ENCODE measurements at regions of chr5 and their contacts with region 1.

Region 1: DNA sequence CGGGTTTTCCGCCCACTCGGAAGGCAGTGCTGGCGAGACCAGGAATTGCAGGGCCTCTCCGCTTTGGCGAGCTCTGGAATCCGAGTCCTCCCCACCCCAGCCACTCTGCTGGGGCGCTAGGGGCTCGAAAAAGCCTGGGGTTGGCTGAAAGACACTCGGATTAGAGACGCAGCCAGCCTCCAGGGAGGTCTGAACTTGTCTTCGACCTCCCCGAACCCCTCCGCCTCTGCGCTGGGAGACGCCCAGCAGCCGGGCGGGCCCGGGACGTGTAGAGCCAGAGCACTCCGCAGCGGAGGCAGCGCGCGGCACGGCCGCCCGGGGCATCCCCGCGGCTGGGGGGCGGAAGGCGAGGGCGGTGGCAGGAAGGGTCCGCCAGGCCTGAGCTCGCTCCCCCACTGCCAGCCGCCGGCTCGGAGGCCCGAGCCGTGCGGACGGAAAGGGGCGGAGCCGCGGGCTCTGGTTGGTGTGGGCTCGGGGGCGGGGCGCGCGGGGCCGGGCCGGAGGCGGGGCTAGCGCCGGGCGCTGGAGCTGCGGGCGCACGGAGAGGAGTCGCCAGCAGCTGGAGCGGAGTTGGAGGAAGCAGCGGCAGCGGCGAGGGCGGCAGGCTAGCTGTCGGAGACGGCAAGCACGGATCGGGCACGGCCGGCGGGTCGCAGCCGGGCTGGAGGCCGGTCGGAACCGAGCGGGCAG is at the start of gene PIK3R1:
- DNase-seq: peak; percentile 91 to 94 (median 92)
- H3K4me3 ChIP-seq: peak within 1 kb of the TSS; percentile 85 to 89
- H3K4me3 Mint-ChIP-seq: peak within 1 kb of the TSS; percentile 91 to 97 (median 94)
- H3K27ac ChIP-seq: peak within 1 kb of the TSS; percentile 80
- H3K27ac Mint-ChIP-seq: peak within 1 kb of the TSS; percentile 93 to 96 (median 95)
- H3K4me1 ChIP-seq: peaks cover 43% of the 10 kb centered on the region
- H3K4me1 Mint-ChIP-seq: peaks cover 37 to 51% (median 46%) of the 10 kb centered on the region in 4 donors
- H3K27me3 ChIP-seq: no peaks in the 10 kb centered on the region
- H3K27me3 Mint-ChIP-seq: no peaks in the 10 kb centered on the region
- total RNA-seq, gene PIK3R1: 151 to 152 TPM

Region 2: GRCh38 chr5:67215583-67216471 is 999.5 kb before region 1 on chr5:
- CTCF ChIA-PET with region 1: no interaction called
- POLR2A ChIA-PET with region 1: interaction called, 10 read pairs
- intact Hi-C with region 1: loop called (anchors 5 kb)
- DNase-seq: peak; percentile 72 to 82 (median 80)
- H3K4me3 ChIP-seq: peak overlapping the region; percentile 10 to 44
- H3K4me3 Mint-ChIP-seq: peak overlapping the region; percentile 52 to 91 (median 82)
- H3K27ac ChIP-seq: peak overlapping the region; percentile 52
- H3K27ac Mint-ChIP-seq: peak overlapping the region; percentile 94 to 99 (median 98)
- H3K4me1 ChIP-seq: peaks cover 65% of the 10 kb centered on the region
- H3K4me1 Mint-ChIP-seq: peaks cover 57 to 69% (median 60%) of the 10 kb centered on the region in 4 donors
- H3K27me3 ChIP-seq: no peaks in the 10 kb centered on the region
- H3K27me3 Mint-ChIP-seq: no peaks in the 10 kb centered on the region

Region 3: GRCh38 chr5:67971223-67971830 is 244.0 kb before region 1 on chr5:
- CTCF ChIA-PET with region 1: no interaction called
- POLR2A ChIA-PET with region 1: no interaction called
- intact Hi-C with region 1: no loop called
- DNase-seq: no peak
- H3K4me3 ChIP-seq: no peak overlapping the region
- H3K4me3 Mint-ChIP-seq: no peak overlapping the region
- H3K27ac ChIP-seq: no peak overlapping the region
- H3K27ac Mint-ChIP-seq: no peak overlapping the region
- H3K4me1 ChIP-seq: no peaks in the 10 kb centered on the region
- H3K4me1 Mint-ChIP-seq: no peaks in the 10 kb centered on the region
- H3K27me3 ChIP-seq: no peaks in the 10 kb centered on the region
- H3K27me3 Mint-ChIP-seq: no peaks in the 10 kb centered on the region

Region 4: GRCh38 chr5:68137511-68138140 is 77.7 kb before region 1 on chr5:
- CTCF ChIA-PET with region 1: no interaction called
- POLR2A ChIA-PET with region 1: no interaction called
- intact Hi-C with region 1: no loop called
- DNase-seq: no peak
- H3K4me3 ChIP-seq: no peak overlapping the region
- H3K4me3 Mint-ChIP-seq: no peak overlapping the region
- H3K27ac ChIP-seq: no peak overlapping the region
- H3K27ac Mint-ChIP-seq: no peak overlapping the region
- H3K4me1 ChIP-seq: peaks cover 11% of the 10 kb centered on the region
- H3K4me1 Mint-ChIP-seq: peaks cover 3 to 12% (median 9%) of the 10 kb centered on the region in 4 donors
- H3K27me3 ChIP-seq: no peaks in the 10 kb centered on the region
- H3K27me3 Mint-ChIP-seq: peaks cover 7 to 9% of the 10 kb centered on the region in 2 donors

Region 5: GRCh38 chr5:68149189-68149588 is 66.2 kb before region 1 on chr5:
- CTCF ChIA-PET with region 1: no interaction called
- POLR2A ChIA-PET with region 1: no interaction called
- intact Hi-C with region 1: no loop called
- DNase-seq: no peak
- H3K4me3 ChIP-seq: no peak overlapping the region
- H3K4me3 Mint-ChIP-seq: no peak overlapping the region
- H3K27ac ChIP-seq: no peak overlapping the region
- H3K27ac Mint-ChIP-seq: no peak overlapping the region
- H3K4me1 ChIP-seq: no peaks in the 10 kb centered on the region
- H3K4me1 Mint-ChIP-seq: peaks cover 0 to 7% (median 3%) of the 10 kb centered on the region in 4 donors
- H3K27me3 ChIP-seq: no peaks in the 10 kb centered on the region
- H3K27me3 Mint-ChIP-seq: no peaks in the 10 kb centered on the region

Region 6: GRCh38 chr5:68239487-68239886 is 24.1 kb after region 1 on chr5:
- CTCF ChIA-PET with region 1: interaction called, 19 read pairs
- POLR2A ChIA-PET with region 1: interaction called, 35 read pairs
- intact Hi-C with region 1: loop called (anchors 1 kb)
- DNase-seq: peak; percentile 76 to 93 (median 79)
- H3K4me3 ChIP-seq: no peak overlapping the region
- H3K4me3 Mint-ChIP-seq: peak overlapping the region in 7 of 8 donors; percentile 34 to 76 (median 60)
- H3K27ac ChIP-seq: peak overlapping the region; percentile 20
- H3K27ac Mint-ChIP-seq: peak overlapping the region; percentile 73 to 97 (median 89)
- H3K4me1 ChIP-seq: peaks cover 77% of the 10 kb centered on the region
- H3K4me1 Mint-ChIP-seq: peaks cover 67 to 90% (median 78%) of the 10 kb centered on the region in 4 donors
- H3K27me3 ChIP-seq: no peaks in the 10 kb centered on the region
- H3K27me3 Mint-ChIP-seq: no peaks in the 10 kb centered on the region

Region 7: DNA sequence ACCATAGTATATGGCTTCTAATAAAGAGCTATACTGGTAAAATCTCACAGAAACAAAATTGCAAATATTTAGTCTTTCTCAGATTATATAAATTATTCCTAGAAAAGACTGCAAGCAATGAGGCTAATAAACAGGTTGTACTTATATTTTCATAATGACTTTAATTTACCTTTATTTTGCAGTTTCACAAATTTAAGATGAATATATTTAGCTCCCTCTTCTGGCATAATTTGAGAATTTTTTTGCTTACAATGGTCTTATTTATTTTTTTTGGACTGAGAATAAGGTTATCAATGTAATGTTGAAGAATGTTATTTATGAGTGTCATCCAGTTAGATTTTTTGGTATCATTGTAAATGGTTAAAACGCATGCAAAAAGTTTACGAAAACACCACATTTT is 56.9 kb after region 1 on chr5:
- CTCF ChIA-PET with region 1: interaction called, 17 read pairs
- POLR2A ChIA-PET with region 1: interaction called, 69 read pairs
- intact Hi-C with region 1: no loop called
- DNase-seq: peak in 2 of 5 donors; percentile 44 to 50
- H3K4me3 ChIP-seq: no peak overlapping the region
- H3K4me3 Mint-ChIP-seq: peak overlapping the region in 4 of 8 donors; percentile 15 to 46 (median 22)
- H3K27ac ChIP-seq: no peak overlapping the region
- H3K27ac Mint-ChIP-seq: peak overlapping the region; percentile 56 to 99 (median 80)
- H3K4me1 ChIP-seq: peaks cover 97% of the 10 kb centered on the region
- H3K4me1 Mint-ChIP-seq: peaks cover 66 to 95% (median 81%) of the 10 kb centered on the region in 4 donors
- H3K27me3 ChIP-seq: no peaks in the 10 kb centered on the region
- H3K27me3 Mint-ChIP-seq: no peaks in the 10 kb centered on the region

Region 8: DNA sequence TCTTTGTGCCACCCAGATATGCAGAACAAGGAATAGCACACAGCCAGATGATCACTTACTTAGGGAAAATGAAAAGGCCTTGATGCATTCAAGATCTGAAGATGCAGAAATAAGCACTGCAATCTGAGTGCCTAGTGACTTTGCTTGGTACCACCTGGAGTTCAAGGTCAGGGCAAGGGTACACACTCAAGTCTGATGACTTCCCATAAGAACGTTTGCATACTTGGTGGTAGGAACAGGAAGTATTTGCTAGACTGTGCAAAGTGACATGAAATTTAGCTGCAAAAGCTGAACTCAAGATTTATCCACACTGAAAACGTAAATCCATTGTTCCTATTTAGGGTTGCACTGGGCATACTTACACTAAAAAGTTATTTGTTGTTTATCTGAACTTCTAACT is 177.3 kb after region 1 on chr5:
- CTCF ChIA-PET with region 1: no interaction called
- POLR2A ChIA-PET with region 1: no interaction called
- intact Hi-C with region 1: no loop called
- DNase-seq: no peak
- H3K4me3 ChIP-seq: no peak overlapping the region
- H3K4me3 Mint-ChIP-seq: peak overlapping the region in 1 of 8 donors; percentile 31
- H3K27ac ChIP-seq: no peak overlapping the region
- H3K27ac Mint-ChIP-seq: peak overlapping the region in 3 of 7 donors; percentile 27 to 33 (median 30)
- H3K4me1 ChIP-seq: peaks cover 10% of the 10 kb centered on the region
- H3K4me1 Mint-ChIP-seq: peaks cover 11 to 24% (median 16%) of the 10 kb centered on the region in 4 donors
- H3K27me3 ChIP-seq: no peaks in the 10 kb centered on the region
- H3K27me3 Mint-ChIP-seq: no peaks in the 10 kb centered on the region

Region 9: GRCh38 chr5:68433923-68434879 is 218.8 kb after region 1 on chr5:
- CTCF ChIA-PET with region 1: no interaction called
- POLR2A ChIA-PET with region 1: no interaction called
- intact Hi-C with region 1: loop called (anchors 1 kb)
- DNase-seq: peak; percentile 76 to 98 (median 83)
- H3K4me3 ChIP-seq: peak overlapping the region; percentile 7 to 42
- H3K4me3 Mint-ChIP-seq: peak overlapping the region; percentile 73 to 89 (median 80)
- H3K27ac ChIP-seq: peak overlapping the region; percentile 54
- H3K27ac Mint-ChIP-seq: peak overlapping the region; percentile 88 to 95 (median 91)
- H3K4me1 ChIP-seq: peaks cover 40% of the 10 kb centered on the region
- H3K4me1 Mint-ChIP-seq: peaks cover 29 to 39% (median 36%) of the 10 kb centered on the region in 4 donors
- H3K27me3 ChIP-seq: no peaks in the 10 kb centered on the region
- H3K27me3 Mint-ChIP-seq: no peaks in the 10 kb centered on the region